IMR-90 (cell line): ENCODE measurements at regions of chr2 and their contacts with region 1.

Region 1: DNA sequence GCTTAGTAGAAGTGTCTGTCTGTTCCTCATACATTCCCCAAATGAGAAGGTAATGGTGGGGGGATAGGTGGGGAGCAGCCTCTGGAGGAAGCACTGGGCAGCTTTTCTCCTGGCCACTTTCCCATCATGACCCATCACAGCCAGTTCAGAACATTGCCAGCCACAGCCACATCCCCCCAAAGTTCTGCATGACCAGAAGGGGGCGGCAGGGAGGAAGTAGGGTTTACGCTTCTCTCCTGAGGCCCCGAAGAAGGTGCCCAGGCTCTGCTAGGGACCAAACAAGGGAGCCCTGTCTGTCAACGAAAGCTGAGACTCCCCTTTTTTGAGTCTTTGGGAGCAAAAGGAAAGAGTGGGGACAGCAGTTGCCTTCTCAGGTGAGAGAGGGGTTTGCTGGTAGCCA is 7.7 kb downstream of the IGFBP5 start:
- DNase-seq: no peak
- ATAC-seq: no peak
- H3K4me3 ChIP-seq: peak overlapping the region; percentile 1; the same call in 1 of the 2 replicates
- H3K27ac ChIP-seq: peak overlapping the region; percentile 31; the same call in 1 of the 2 replicates
- H3K4me1 ChIP-seq: peaks cover 7% of the 10 kb centered on the region
- H3K27me3 ChIP-seq: no peaks in the 10 kb centered on the region
- CTCF ChIP-seq: peak; percentile 49
- POLR2A ChIP-seq: no peak
- RAD21 ChIP-seq: peak; percentile 38

Region 2: GRCh38 chr2:216149741-216150140 is 537.9 kb before region 1 on chr2:
- CTCF ChIA-PET with region 1: no interaction called
- POLR2A ChIA-PET with region 1: interaction called, 11 read pairs
- dilution Hi-C with region 1: no loop called
- in situ Hi-C with region 1: no loop called
- intact Hi-C with region 1: no loop called
- DNase-seq: peak; percentile 70
- ATAC-seq: no peak
- H3K4me3 ChIP-seq: no peak overlapping the region
- H3K27ac ChIP-seq: no peak overlapping the region
- H3K4me1 ChIP-seq: peaks cover 3% of the 10 kb centered on the region; the same call in 1 of the 2 replicates
- H3K27me3 ChIP-seq: no peaks in the 10 kb centered on the region
- CTCF ChIP-seq: no peak
- POLR2A ChIP-seq: no peak
- RAD21 ChIP-seq: no peak

Region 3: GRCh38 chr2:216525972-216526371 is 161.7 kb before region 1 on chr2:
- CTCF ChIA-PET with region 1: no interaction called
- POLR2A ChIA-PET with region 1: no interaction called
- dilution Hi-C with region 1: no loop called
- in situ Hi-C with region 1: no loop called
- intact Hi-C with region 1: no loop called
- DNase-seq: no peak
- ATAC-seq: no peak
- H3K4me3 ChIP-seq: no peak overlapping the region
- H3K27ac ChIP-seq: no peak overlapping the region
- H3K4me1 ChIP-seq: no peaks in the 10 kb centered on the region
- H3K27me3 ChIP-seq: no peaks in the 10 kb centered on the region
- CTCF ChIP-seq: no peak
- POLR2A ChIP-seq: no peak
- RAD21 ChIP-seq: no peak

Region 4: DNA sequence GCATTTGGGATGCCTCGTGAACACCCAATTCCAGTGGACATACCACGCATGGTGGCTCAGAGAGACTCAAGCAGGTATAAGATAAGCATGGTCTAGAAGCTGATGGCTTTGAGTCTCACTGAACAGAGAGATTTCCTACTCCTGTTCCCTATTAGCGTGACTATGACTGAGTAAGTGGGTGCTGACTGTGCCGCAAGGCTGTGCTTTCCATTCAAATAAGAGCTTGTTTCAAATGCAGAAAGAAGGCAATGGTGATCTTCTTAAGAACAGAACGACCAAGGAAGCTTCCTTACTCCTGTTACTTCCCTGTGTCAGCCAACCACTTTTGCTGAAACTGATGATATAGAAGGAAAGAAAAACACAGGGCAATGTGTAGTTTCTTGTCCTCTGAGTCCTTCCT is 117.9 kb before region 1 on chr2:
- CTCF ChIA-PET with region 1: no interaction called
- POLR2A ChIA-PET with region 1: interaction called, 10 read pairs
- dilution Hi-C with region 1: no loop called
- in situ Hi-C with region 1: no loop called
- intact Hi-C with region 1: no loop called
- DNase-seq: no peak
- ATAC-seq: no peak
- H3K4me3 ChIP-seq: no peak overlapping the region
- H3K27ac ChIP-seq: no peak overlapping the region
- H3K4me1 ChIP-seq: no peaks in the 10 kb centered on the region
- H3K27me3 ChIP-seq: peaks cover 10% of the 10 kb centered on the region
- CTCF ChIP-seq: no peak
- POLR2A ChIP-seq: no peak
- RAD21 ChIP-seq: no peak

Region 5: GRCh38 chr2:217440000-217440399 is 752.4 kb after region 1 on chr2:
- CTCF ChIA-PET with region 1: no interaction called
- POLR2A ChIA-PET with region 1: interaction called, 11 read pairs
- dilution Hi-C with region 1: no loop called
- in situ Hi-C with region 1: no loop called
- intact Hi-C with region 1: no loop called
- DNase-seq: peak; percentile 22
- ATAC-seq: no peak; the same call in 1 of the 2 replicates
- H3K4me3 ChIP-seq: no peak overlapping the region
- H3K27ac ChIP-seq: no peak overlapping the region
- H3K4me1 ChIP-seq: peaks cover 10% of the 10 kb centered on the region
- H3K27me3 ChIP-seq: no peaks in the 10 kb centered on the region
- CTCF ChIP-seq: no peak
- POLR2A ChIP-seq: no peak
- RAD21 ChIP-seq: no peak